HEK293 (cell line): ENCODE measurements at regions of chr9 and their contacts with region 1.

Region 1: GRCh38 chr9:136784249-136784996 is 6.7 kb upstream of the TMEM141 start:
- H3K4me3 ChIP-seq: no peak overlapping the region
- H3K27ac ChIP-seq: no peak overlapping the region
- H3K4me1 ChIP-seq: no peaks in the 10 kb centered on the region; the same call in 1 of the 2 replicates
- CTCF ChIP-seq: 0 out of 2 replicates have a peak, but pooled peaks have one; percentile 25

Region 2: DNA sequence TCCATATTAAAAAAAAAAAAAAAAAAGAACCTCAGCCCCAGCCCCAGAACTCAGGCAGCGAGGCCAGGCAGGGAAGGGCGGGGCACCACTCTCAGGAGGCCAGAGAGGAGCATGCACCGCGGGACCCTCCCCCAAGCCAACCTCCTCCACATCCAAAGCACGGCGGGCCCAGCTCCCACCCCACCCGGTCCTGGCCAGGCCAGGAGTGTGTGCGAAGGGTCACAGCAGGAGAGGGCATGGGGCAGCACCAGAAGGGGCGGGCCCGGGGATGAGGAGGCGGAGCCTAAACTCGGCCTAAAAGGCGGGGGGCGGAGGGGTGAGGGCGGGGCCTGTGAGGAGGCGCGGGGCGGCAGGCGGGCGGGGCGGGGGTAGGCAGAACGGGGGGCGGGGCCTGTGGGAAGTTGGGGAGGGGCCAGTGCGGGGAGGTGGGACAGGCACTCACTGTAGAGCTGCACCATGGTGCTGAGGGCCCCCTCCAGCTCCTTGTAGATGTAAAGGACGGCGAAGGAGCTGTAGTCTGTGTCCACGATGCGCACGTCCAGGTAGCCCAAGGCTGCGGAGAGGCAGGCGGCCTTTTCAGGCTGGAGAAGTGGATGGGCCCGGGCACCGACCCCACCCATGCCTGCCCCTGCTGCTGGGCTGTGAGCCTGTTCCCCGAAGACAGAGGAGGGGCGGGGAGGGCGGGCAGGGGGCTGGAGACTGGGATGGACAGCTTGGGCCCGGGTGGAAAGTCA is 21.3 kb before region 1 on chr9:
- CTCF ChIA-PET with region 1: interaction called, 79 read pairs
- POLR2A ChIA-PET with region 1: no interaction called
- H3K4me3 ChIP-seq: no peak overlapping the region
- H3K27ac ChIP-seq: no peak overlapping the region
- H3K4me1 ChIP-seq: no peaks in the 10 kb centered on the region
- CTCF ChIP-seq: no peak